ENCODE measurements at regions of chr16 and their contacts with region 1.

Region 1: DNA sequence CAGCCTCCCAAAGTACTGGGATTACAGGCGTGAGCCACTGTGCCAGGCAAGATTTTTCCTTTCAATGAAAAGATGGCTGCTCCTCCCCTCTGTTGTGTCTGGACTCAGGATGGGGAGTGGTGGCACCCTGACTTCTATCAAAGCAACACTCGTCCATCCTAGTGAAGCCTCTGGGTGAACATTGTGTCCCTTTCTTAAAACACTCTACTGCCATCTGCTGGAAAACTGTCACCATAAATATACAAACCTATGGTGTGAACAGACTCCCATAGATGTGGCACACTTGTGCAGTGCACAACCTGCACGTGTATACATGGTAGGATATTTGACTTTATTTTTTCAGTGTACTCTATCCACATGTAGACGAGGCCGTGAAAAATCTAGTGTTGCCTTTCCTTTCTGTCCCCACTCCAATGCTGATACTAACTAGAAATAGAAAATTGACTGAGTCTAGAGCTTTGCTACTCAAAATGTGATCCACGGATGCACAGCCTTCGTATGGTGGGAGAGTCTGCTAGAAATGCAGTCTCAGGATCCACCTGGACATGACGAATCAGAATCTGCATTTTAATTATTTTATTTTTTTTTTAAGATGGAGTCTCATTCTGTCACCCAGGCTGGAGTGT is 55.9 kb upstream of the PLCG2 start:
- DNase-seq: no peak
- ATAC-seq: peak; percentile 92
- H3K4me3 Mint-ChIP-seq: no peak overlapping the region
- H3K27ac Mint-ChIP-seq: no peak overlapping the region
- H3K4me1 Mint-ChIP-seq: peaks cover 22% of the 10 kb centered on the region
- H3K27me3 Mint-ChIP-seq: peaks cover 1% of the 10 kb centered on the region
- CTCF ChIP-seq: no peak

Region 2: DNA sequence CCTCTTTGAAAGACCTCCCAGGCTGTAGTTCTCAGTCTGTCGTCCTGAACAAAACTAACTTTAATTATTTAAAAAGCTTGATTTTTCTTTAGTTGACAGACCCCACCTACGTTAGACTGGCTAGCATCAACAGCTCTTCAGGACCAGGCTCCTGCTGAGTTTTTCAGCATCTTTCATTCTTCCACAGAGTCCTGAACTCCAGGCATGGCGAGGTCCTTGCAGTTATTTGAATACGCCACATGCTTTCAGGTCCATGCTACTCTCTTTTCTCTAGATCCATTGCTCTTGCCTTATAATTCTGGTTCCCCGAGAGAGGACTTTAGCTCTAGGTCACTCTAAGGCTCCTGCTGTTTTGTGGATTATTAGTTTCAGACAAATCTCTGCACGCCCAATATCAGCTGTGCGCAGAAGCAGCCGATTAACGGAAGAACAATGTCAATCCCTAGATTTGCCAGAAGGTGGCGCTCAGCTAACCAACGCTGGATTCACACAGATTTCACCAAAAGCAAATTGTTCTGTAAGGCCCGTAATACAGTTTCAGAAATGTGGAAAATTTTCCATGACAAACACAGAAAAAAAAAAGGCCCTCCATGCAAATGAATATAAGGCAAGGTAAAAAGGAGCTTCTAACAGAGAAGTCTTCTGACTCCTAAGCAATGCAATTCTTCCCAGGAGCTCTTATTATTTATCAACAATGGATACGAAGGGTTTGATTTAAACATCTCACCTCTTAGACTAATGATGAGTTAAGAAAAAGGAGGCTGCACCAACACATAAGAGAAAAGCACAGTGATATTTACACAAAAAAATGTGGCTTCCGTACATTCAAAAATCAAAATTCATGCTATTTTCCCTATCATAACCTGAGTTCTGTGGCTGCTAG is 518.2 kb before region 1 on chr16:
- CTCF ChIA-PET with region 1: interaction called, 3 read pairs
- POLR2A ChIA-PET with region 1: no interaction called
- intact Hi-C with region 1: loop called (anchors 2 kb)
- DNase-seq: no peak
- ATAC-seq: no peak
- H3K4me3 Mint-ChIP-seq: no peak overlapping the region
- H3K27ac Mint-ChIP-seq: no peak overlapping the region
- H3K4me1 Mint-ChIP-seq: no peaks in the 10 kb centered on the region
- H3K27me3 Mint-ChIP-seq: peaks cover 17% of the 10 kb centered on the region
- CTCF ChIP-seq: no peak

Region 3: GRCh38 chr16:81261049-81261648 is 462.1 kb before region 1 on chr16:
- CTCF ChIA-PET with region 1: no interaction called
- POLR2A ChIA-PET with region 1: no interaction called
- intact Hi-C with region 1: loop called (anchors 5 kb)
- DNase-seq: no peak
- ATAC-seq: no peak
- H3K4me3 Mint-ChIP-seq: no peak overlapping the region
- H3K27ac Mint-ChIP-seq: no peak overlapping the region
- H3K4me1 Mint-ChIP-seq: no peaks in the 10 kb centered on the region
- H3K27me3 Mint-ChIP-seq: peaks cover 5% of the 10 kb centered on the region
- CTCF ChIP-seq: no peak

Region 4: GRCh38 chr16:81366316-81366932 is 356.8 kb before region 1 on chr16:
- CTCF ChIA-PET with region 1: interaction called, 39 read pairs
- POLR2A ChIA-PET with region 1: interaction called, 3 read pairs
- intact Hi-C with region 1: loop called (anchors 1 kb)
- DNase-seq: no peak
- ATAC-seq: peak; percentile 82
- H3K4me3 Mint-ChIP-seq: no peak overlapping the region
- H3K27ac Mint-ChIP-seq: no peak overlapping the region
- H3K4me1 Mint-ChIP-seq: no peaks in the 10 kb centered on the region
- H3K27me3 Mint-ChIP-seq: no peaks in the 10 kb centered on the region
- CTCF ChIP-seq: no peak

Region 5: DNA sequence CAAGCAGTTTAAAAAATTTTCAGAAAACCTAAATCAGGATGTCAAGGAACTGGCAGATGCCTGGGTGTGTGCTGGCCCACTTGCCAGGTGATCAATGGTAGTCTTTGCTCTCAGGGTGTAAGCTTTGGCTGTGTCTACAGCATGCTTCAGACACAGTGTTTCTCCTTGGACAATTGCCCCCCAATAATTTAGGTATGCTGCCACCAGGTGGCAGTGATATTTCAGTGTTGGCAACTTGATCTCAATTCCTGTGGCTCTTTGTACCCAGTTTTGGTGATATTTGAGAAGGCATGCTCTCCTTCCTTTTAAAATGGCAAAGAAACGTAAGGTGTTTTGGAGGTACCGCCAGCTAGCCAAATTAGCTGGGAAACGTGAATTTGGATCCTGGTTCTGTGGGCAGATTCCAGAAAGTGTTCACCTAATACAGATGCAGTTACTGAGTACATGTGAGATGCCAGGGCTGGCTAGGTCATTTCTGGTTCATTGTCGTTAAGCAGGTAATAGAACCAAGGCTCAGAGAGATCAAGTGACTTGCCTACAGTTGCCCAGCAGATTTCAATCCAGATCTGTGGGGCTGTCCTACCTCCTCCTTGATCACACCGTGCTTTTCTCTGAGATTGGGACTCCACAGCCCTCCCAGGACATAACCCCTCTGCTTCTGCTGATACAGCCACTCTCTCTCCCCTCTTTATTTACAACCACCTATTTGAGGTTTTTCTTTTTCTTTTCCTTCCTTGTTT is 99.7 kb before region 1 on chr16:
- CTCF ChIA-PET with region 1: interaction called, 6 read pairs
- POLR2A ChIA-PET with region 1: no interaction called
- intact Hi-C with region 1: loop called (anchors 1 kb)
- DNase-seq: no peak
- ATAC-seq: peak; percentile 41
- H3K4me3 Mint-ChIP-seq: no peak overlapping the region
- H3K27ac Mint-ChIP-seq: no peak overlapping the region
- H3K4me1 Mint-ChIP-seq: peaks cover 17% of the 10 kb centered on the region
- H3K27me3 Mint-ChIP-seq: no peaks in the 10 kb centered on the region
- CTCF ChIP-seq: no peak